Activated B cell treated with CpG ODN at 0.5 μM for 24 hours (primary cell): ENCODE measurements at regions of chr1 and their contacts with region 1.

Region 1: GRCh38 chr1:84690397-84691121 is at the start of gene SSX2IP:
- DNase-seq: peak; percentile 100
- ATAC-seq: peak; percentile 86
- H3K4me3 Mint-ChIP-seq: peak within 1 kb of the TSS; percentile 91
- H3K27ac Mint-ChIP-seq: peak within 1 kb of the TSS; percentile 89
- H3K4me1 Mint-ChIP-seq: peaks cover 32% of the 10 kb centered on the region
- H3K27me3 Mint-ChIP-seq: no peaks in the 10 kb centered on the region
- CTCF ChIP-seq: no peak
- total RNA-seq, gene SSX2IP: 4.5 and 5.4 TPM in 2 replicates

Region 2: DNA sequence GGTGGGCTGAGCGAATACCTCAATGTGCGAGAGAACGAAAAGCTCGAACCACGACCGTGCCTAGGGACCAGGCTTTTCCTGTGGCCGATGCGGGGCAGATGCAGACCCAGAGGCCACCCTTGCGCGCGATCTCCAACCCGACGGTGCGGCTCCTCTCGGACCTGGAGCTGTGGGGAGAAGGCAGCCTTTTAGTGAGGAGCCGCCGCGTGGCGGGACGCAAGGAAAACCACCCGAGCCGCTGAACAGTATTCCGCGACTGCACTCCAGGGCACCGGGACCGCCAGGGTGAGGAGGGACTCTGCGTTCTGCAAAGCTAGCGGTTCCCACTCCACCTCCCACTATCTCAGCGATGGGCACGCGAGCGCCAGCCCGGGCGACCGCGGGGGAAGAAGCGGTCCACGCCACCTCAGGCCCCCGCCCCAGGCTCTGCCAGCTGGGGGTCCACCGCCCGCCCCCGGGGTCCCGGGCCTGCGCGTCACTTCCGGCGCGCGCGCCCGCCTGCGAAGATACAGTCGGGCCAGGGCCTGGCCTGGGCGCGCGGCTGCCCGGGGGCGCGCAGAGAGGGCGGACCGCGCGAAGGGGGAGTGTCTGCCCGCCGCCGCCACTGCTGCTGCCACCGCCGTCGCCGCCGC is 613.0 kb before region 1 on chr1:
- CTCF ChIA-PET with region 1: no interaction called
- POLR2A ChIA-PET with region 1: no interaction called
- intact Hi-C with region 1: loop called (anchors 2 kb)
- DNase-seq: peak; percentile 80
- ATAC-seq: peak; percentile 90
- H3K4me3 Mint-ChIP-seq: peak overlapping the region; percentile 91
- H3K27ac Mint-ChIP-seq: peak overlapping the region; percentile 75
- H3K4me1 Mint-ChIP-seq: peaks cover 11% of the 10 kb centered on the region
- H3K27me3 Mint-ChIP-seq: no peaks in the 10 kb centered on the region
- CTCF ChIP-seq: no peak

Region 3: GRCh38 chr1:84442256-84442655 is 248.3 kb before region 1 on chr1:
- CTCF ChIA-PET with region 1: no interaction called
- POLR2A ChIA-PET with region 1: no interaction called
- intact Hi-C with region 1: loop called (anchors 2 kb)
- DNase-seq: no peak
- ATAC-seq: peak; percentile 94
- H3K4me3 Mint-ChIP-seq: no peak overlapping the region
- H3K27ac Mint-ChIP-seq: peak overlapping the region; percentile 24
- H3K4me1 Mint-ChIP-seq: peaks cover 23% of the 10 kb centered on the region
- H3K27me3 Mint-ChIP-seq: peaks cover 5% of the 10 kb centered on the region
- CTCF ChIP-seq: no peak

Region 4: DNA sequence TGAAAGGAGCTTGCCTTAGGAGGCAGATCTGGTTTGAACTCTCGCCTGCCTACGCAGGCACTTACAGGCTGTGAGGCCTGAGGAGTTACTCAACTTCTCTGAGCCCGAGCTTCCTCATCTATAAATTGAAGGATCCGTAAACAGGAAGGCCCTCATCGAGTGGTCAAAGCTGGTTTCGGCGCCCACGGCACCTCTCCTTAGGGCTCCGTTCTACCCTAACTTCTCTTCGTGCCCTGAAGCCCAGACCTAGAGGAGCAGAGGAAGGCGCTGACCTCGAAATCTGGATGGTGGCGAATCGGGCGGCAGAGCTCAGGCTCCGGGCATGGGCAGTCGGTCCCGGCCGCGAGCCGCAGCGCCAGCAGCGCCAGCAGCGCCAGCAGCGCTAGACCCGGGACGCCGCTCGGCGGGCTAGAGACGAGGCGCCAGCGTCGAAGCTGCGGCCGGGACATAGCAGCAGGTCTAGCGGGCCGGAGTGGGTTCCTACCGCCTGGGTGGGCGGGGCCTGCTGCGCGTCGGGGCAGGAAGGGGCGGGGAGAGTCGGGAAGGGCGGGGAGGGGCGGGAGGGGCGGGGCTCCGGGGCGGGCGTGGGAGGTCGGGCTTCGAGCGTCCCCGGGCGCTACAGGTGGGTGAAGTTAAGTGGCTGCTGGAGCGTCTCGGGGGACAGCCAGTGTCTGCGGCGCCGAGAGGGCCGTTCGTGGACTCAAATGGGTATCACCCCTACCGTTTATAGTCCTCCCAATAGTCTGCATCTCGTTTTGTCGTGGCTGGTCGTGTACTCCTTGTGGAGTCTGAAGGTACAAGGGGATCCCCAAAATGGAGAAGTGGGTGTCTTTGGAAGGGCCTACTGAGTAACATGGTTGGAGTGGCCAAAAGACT is 116.4 kb before region 1 on chr1 and contains the start of gene CTBS:
- CTCF ChIA-PET with region 1: interaction called, 3 read pairs
- POLR2A ChIA-PET with region 1: interaction called, 9 read pairs
- intact Hi-C with region 1: loop called (anchors 1 kb)
- DNase-seq: peak; percentile 81
- ATAC-seq: peak; percentile 91
- H3K4me3 Mint-ChIP-seq: peak within 1 kb of the TSS; percentile 96
- H3K27ac Mint-ChIP-seq: peak within 1 kb of the TSS; percentile 99
- H3K4me1 Mint-ChIP-seq: peaks cover 40% of the 10 kb centered on the region
- H3K27me3 Mint-ChIP-seq: no peaks in the 10 kb centered on the region
- CTCF ChIP-seq: no peak
- total RNA-seq, gene CTBS: 11.8 and 13.2 TPM in 2 replicates

Region 5: GRCh38 chr1:85061711-85062424 is 371.3 kb after region 1 on chr1:
- CTCF ChIA-PET with region 1: no interaction called
- POLR2A ChIA-PET with region 1: no interaction called
- intact Hi-C with region 1: loop called (anchors 10 kb)
- DNase-seq: peak; percentile 56
- ATAC-seq: peak; percentile 98
- H3K4me3 Mint-ChIP-seq: peak overlapping the region; percentile 92
- H3K27ac Mint-ChIP-seq: peak overlapping the region; percentile 83
- H3K4me1 Mint-ChIP-seq: peaks cover 27% of the 10 kb centered on the region
- H3K27me3 Mint-ChIP-seq: peaks cover 10% of the 10 kb centered on the region
- CTCF ChIP-seq: no peak